ENCODE measurements at regions of chr10 and their contacts with region 1.

Region 1: DNA sequence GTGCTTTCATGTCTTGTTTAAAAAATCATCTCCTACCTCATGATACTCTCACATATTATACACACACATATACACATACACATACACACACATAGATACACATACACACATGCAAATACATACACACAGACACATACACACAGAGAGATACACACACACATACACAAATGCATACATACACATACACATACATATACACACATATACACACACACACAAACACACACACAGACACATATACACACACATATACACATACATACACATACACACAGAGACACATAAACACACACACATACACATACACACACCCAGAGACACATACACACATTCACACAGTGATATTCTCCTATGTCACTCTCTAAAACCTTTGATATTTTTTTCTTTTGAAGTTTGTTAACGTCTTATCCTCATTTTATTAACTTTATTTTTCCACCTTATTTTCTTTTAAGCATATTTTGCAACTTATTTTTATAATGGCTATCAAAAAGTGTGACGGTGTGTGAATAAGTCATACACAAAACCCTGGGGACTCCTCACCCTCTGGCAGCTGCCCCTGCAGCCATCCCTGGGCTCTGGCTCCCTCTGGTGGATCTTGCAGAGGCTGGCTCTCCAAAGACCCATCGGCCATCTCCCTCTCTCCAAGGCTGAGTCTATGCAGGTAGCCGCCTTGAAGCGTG is 3.9 kb upstream of the C10orf120 start:
- DNase-seq: peak in 1 of 2 experiments; percentile 65
- H3K4me3 ChIP-seq: no peak overlapping the region
- H3K27ac ChIP-seq: no peak overlapping the region
- H3K4me1 ChIP-seq: no peaks in the 10 kb centered on the region
- H3K27me3 ChIP-seq: no peaks in the 10 kb centered on the region; the same call in 1 of the 2 replicates
- CTCF ChIP-seq: peak; percentile 77

Region 2: DNA sequence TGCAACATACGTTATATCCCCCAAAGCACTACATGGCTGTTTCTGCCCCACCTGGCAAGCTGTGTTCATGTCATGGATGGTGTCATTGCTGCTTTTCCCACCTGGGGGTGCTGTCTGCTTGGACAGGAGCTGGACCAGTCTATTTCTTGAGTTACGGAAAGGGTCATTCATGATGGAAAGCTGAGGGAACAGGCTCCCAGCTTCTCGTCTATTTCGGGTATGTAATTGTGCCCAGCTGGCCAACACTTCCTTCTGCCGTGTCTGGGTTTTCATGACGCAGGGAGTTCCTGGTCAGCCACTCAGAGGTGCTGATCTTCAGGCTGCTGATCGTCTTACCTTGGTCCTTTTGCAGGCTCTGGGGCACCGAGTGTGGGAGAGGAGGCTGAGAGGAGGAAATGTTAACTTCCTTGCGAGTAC is 423.8 kb before region 1 on chr10:
- CTCF ChIA-PET with region 1: no interaction called
- POLR2A ChIA-PET with region 1: no interaction called
- intact Hi-C with region 1: loop called (anchors 1 kb)
- DNase-seq: peak in 1 of 2 experiments; percentile 64
- H3K4me3 ChIP-seq: no peak overlapping the region
- H3K27ac ChIP-seq: no peak overlapping the region
- H3K4me1 ChIP-seq: no peaks in the 10 kb centered on the region
- H3K27me3 ChIP-seq: no peaks in the 10 kb centered on the region
- CTCF ChIP-seq: peak; percentile 71

Region 3: GRCh38 chr10:122298598-122299301 is 404.8 kb before region 1 on chr10:
- CTCF ChIA-PET with region 1: no interaction called
- POLR2A ChIA-PET with region 1: no interaction called
- intact Hi-C with region 1: loop called (anchors 1 kb)
- DNase-seq: peak; percentile 56 to 65
- H3K4me3 ChIP-seq: no peak overlapping the region; the same call in 1 of the 2 replicates
- H3K27ac ChIP-seq: no peak overlapping the region
- H3K4me1 ChIP-seq: peaks cover 19% of the 10 kb centered on the region
- H3K27me3 ChIP-seq: no peaks in the 10 kb centered on the region
- CTCF ChIP-seq: peak; percentile 84

Region 4: GRCh38 chr10:122435212-122435827 is 268.3 kb before region 1 on chr10:
- CTCF ChIA-PET with region 1: no interaction called
- POLR2A ChIA-PET with region 1: no interaction called
- intact Hi-C with region 1: loop called (anchors 10 kb)
- DNase-seq: peak in 1 of 2 experiments; percentile 38
- H3K4me3 ChIP-seq: no peak overlapping the region
- H3K27ac ChIP-seq: no peak overlapping the region
- H3K4me1 ChIP-seq: no peaks in the 10 kb centered on the region
- H3K27me3 ChIP-seq: no peaks in the 10 kb centered on the region
- CTCF ChIP-seq: peak; percentile 83

Region 5: DNA sequence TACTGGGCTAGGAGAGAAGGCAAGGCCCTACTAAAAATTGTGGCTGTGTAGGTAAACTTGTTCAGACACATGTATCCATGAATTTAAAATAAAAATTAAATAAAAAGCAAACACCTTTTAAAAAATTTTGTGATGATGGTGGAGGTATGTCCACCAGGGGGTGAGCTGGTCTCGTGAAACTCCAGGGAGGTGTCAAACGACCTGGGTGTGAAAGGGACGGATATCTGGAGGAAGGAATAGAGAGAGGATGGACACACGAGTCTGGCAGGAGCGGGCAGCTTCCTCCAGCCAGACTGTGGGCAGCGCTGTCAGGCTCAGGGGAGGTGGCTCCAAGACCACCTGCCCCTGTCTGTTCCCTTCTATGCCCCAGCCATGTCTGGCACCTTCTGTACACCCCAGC is 177.8 kb before region 1 on chr10:
- CTCF ChIA-PET with region 1: no interaction called
- POLR2A ChIA-PET with region 1: no interaction called
- intact Hi-C with region 1: loop called (anchors 5 kb)
- DNase-seq: peak in 1 of 2 experiments; percentile 27
- H3K4me3 ChIP-seq: no peak overlapping the region
- H3K27ac ChIP-seq: no peak overlapping the region
- H3K4me1 ChIP-seq: no peaks in the 10 kb centered on the region
- H3K27me3 ChIP-seq: peaks cover 8% of the 10 kb centered on the region; the same call in 1 of the 2 replicates
- CTCF ChIP-seq: peak; percentile 59

Region 6: GRCh38 chr10:122565728-122566206 is 137.8 kb before region 1 on chr10:
- CTCF ChIA-PET with region 1: no interaction called
- POLR2A ChIA-PET with region 1: no interaction called
- intact Hi-C with region 1: loop called (anchors 10 kb)
- DNase-seq: peak in 1 of 2 experiments; percentile 62
- H3K4me3 ChIP-seq: no peak overlapping the region
- H3K27ac ChIP-seq: no peak overlapping the region
- H3K4me1 ChIP-seq: no peaks in the 10 kb centered on the region
- H3K27me3 ChIP-seq: 0 out of 2 replicates have a peak, but pooled peaks cover 4% of the 10 kb centered on the region
- CTCF ChIP-seq: peak; percentile 77

Region 7: GRCh38 chr10:122577311-122577885 is 126.2 kb before region 1 on chr10:
- CTCF ChIA-PET with region 1: no interaction called
- POLR2A ChIA-PET with region 1: no interaction called
- intact Hi-C with region 1: no loop called
- DNase-seq: no peak
- H3K4me3 ChIP-seq: no peak overlapping the region
- H3K27ac ChIP-seq: no peak overlapping the region
- H3K4me1 ChIP-seq: no peaks in the 10 kb centered on the region
- H3K27me3 ChIP-seq: no peaks in the 10 kb centered on the region
- CTCF ChIP-seq: no peak

Region 8: DNA sequence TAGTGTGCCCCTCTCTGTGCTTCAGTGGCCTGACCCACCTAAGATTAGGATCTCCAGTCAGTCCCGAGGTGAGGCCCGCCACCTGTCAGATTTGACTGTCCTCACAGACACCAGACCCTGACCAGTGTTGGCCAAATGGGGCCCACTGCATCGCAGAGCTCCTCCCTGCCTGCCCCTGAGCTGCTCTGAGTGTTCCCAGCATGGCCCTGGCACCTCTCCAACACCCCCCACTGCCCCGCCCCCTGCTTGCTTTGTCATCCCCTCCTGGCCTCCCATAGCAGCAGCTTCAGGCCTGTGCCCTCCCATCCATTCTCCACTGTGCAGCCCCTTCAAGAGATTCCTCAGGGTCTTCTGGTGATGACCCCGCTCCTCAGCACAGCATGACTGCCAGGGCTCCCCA is 71.5 kb before region 1 on chr10:
- CTCF ChIA-PET with region 1: no interaction called
- POLR2A ChIA-PET with region 1: no interaction called
- intact Hi-C with region 1: no loop called
- DNase-seq: no peak
- H3K4me3 ChIP-seq: no peak overlapping the region
- H3K27ac ChIP-seq: no peak overlapping the region
- H3K4me1 ChIP-seq: no peaks in the 10 kb centered on the region
- H3K27me3 ChIP-seq: no peaks in the 10 kb centered on the region
- CTCF ChIP-seq: no peak

Region 9: GRCh38 chr10:122648599-122649428 is 54.8 kb before region 1 on chr10:
- CTCF ChIA-PET with region 1: no interaction called
- POLR2A ChIA-PET with region 1: no interaction called
- intact Hi-C with region 1: loop called (anchors 2 kb)
- DNase-seq: peak in 1 of 2 experiments; percentile 37
- H3K4me3 ChIP-seq: no peak overlapping the region
- H3K27ac ChIP-seq: no peak overlapping the region
- H3K4me1 ChIP-seq: no peaks in the 10 kb centered on the region
- H3K27me3 ChIP-seq: peaks cover 16% of the 10 kb centered on the region; the same call in 1 of the 2 replicates
- CTCF ChIP-seq: peak; percentile 66

Measured in PC-9 (cell line).